Activated B cell treated with CpG ODN at 0.5 μM for 24 hours (primary cell): ENCODE measurements at regions of chr9 and their contacts with region 1.

Region 1: GRCh38 chr9:33167046-33167808 is at the start of gene B4GALT1:
- DNase-seq: peak; percentile 95
- ATAC-seq: peak; percentile 74
- H3K4me3 Mint-ChIP-seq: peak within 1 kb of the TSS; percentile 97
- H3K27ac Mint-ChIP-seq: peak within 1 kb of the TSS; percentile 98
- H3K4me1 Mint-ChIP-seq: peaks cover 63% of the 10 kb centered on the region
- H3K27me3 Mint-ChIP-seq: no peaks in the 10 kb centered on the region
- CTCF ChIP-seq: no peak
- total RNA-seq, gene B4GALT1: 111 and 118 TPM in 2 replicates

Region 2: GRCh38 chr9:32550562-32551433 is 616.4 kb before region 1 on chr9:
- CTCF ChIA-PET with region 1: no interaction called
- POLR2A ChIA-PET with region 1: interaction called, 7 read pairs
- intact Hi-C with region 1: loop called (anchors 10 kb)
- DNase-seq: peak; percentile 91
- ATAC-seq: peak; percentile 80
- H3K4me3 Mint-ChIP-seq: peak overlapping the region; percentile 95
- H3K27ac Mint-ChIP-seq: peak overlapping the region; percentile 98
- H3K4me1 Mint-ChIP-seq: peaks cover 34% of the 10 kb centered on the region
- H3K27me3 Mint-ChIP-seq: no peaks in the 10 kb centered on the region
- CTCF ChIP-seq: no peak

Region 3: GRCh38 chr9:33076358-33077004 is 90.7 kb before region 1 on chr9 and contains the start of gene SMU1:
- CTCF ChIA-PET with region 1: interaction called, 12 read pairs
- POLR2A ChIA-PET with region 1: interaction called, 23 read pairs
- intact Hi-C with region 1: loop called (anchors 1 kb)
- DNase-seq: peak; percentile 86
- ATAC-seq: peak; percentile 98
- H3K4me3 Mint-ChIP-seq: peak within 1 kb of the TSS; percentile 98
- H3K27ac Mint-ChIP-seq: peak within 1 kb of the TSS; percentile 99
- H3K4me1 Mint-ChIP-seq: peaks cover 26% of the 10 kb centered on the region
- H3K27me3 Mint-ChIP-seq: no peaks in the 10 kb centered on the region
- CTCF ChIP-seq: no peak
- total RNA-seq, gene SMU1: 26.8 and 28.1 TPM in 2 replicates

Region 4: DNA sequence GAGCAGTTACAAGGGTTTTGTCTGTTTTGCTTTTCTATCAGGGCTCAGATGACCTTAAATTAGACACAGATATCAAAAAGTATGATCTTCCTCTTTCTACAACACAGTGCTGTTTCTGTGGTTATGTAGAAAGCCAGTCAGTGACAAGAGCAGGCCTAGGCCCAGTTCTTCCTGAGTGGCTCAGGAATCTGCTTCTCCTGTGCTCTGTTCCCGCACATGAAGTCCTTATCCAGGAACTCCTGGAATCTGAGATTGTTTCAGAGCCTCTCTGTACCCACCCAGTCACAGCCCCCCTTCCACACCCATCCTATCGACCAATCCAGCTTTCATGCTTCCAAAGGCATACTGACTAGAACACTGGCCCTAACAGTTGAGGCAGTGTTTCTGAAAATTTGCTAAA is 50.4 kb before region 1 on chr9:
- CTCF ChIA-PET with region 1: interaction called, 5 read pairs
- POLR2A ChIA-PET with region 1: interaction called, 27 read pairs
- intact Hi-C with region 1: no loop called
- DNase-seq: no peak
- ATAC-seq: peak; percentile 86
- H3K4me3 Mint-ChIP-seq: peak overlapping the region; percentile 70
- H3K27ac Mint-ChIP-seq: peak overlapping the region; percentile 92
- H3K4me1 Mint-ChIP-seq: peaks cover 62% of the 10 kb centered on the region
- H3K27me3 Mint-ChIP-seq: no peaks in the 10 kb centered on the region
- CTCF ChIP-seq: no peak

Region 5: GRCh38 chr9:33139421-33140228 is 27.6 kb before region 1 on chr9:
- CTCF ChIA-PET with region 1: interaction called, 9 read pairs
- POLR2A ChIA-PET with region 1: interaction called, 593 read pairs
- intact Hi-C with region 1: loop called (anchors 1 kb)
- DNase-seq: peak; percentile 17
- ATAC-seq: no peak
- H3K4me3 Mint-ChIP-seq: peak overlapping the region; percentile 75
- H3K27ac Mint-ChIP-seq: peak overlapping the region; percentile 97
- H3K4me1 Mint-ChIP-seq: peaks cover 98% of the 10 kb centered on the region
- H3K27me3 Mint-ChIP-seq: no peaks in the 10 kb centered on the region
- CTCF ChIP-seq: no peak

Region 6: DNA sequence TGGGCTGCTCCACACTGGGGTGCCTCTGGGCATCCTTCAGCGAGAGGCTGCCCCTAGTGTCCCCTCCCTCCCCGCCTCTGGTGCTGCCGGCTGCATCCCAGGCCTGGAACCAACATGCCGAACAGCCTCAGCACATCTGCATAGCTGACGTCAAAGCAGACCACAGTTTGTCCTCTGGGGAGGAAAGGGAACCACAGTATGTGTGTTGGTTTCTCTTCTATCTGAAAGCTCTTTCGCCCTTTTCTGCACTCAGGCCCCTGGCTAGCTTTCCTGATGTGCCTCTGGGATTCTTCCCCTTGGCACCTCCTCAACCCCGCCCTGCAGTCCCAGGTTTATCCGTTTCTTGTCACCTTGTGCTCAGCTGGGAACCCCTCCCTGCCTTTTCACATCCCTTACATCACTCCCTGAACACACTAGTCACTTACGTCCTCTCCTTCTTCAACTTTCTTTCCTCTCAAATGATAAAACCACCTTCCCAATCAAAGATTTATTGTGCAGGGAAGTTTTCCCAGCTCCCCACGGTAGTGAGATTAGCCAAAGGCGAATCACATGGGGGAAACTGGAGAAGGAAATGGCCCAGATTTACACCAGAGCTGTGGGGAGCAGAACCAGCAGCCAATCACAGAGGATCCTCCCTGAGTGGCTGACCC is 35.5 kb after region 1 on chr9:
- CTCF ChIA-PET with region 1: interaction called, 9 read pairs
- POLR2A ChIA-PET with region 1: interaction called, 30 read pairs
- intact Hi-C with region 1: loop called (anchors 1 kb)
- DNase-seq: peak; percentile 67
- ATAC-seq: peak; percentile 98
- H3K4me3 Mint-ChIP-seq: peak overlapping the region; percentile 78
- H3K27ac Mint-ChIP-seq: peak overlapping the region; percentile 83
- H3K4me1 Mint-ChIP-seq: peaks cover 24% of the 10 kb centered on the region
- H3K27me3 Mint-ChIP-seq: peaks cover 1% of the 10 kb centered on the region
- CTCF ChIP-seq: no peak

Region 7: DNA sequence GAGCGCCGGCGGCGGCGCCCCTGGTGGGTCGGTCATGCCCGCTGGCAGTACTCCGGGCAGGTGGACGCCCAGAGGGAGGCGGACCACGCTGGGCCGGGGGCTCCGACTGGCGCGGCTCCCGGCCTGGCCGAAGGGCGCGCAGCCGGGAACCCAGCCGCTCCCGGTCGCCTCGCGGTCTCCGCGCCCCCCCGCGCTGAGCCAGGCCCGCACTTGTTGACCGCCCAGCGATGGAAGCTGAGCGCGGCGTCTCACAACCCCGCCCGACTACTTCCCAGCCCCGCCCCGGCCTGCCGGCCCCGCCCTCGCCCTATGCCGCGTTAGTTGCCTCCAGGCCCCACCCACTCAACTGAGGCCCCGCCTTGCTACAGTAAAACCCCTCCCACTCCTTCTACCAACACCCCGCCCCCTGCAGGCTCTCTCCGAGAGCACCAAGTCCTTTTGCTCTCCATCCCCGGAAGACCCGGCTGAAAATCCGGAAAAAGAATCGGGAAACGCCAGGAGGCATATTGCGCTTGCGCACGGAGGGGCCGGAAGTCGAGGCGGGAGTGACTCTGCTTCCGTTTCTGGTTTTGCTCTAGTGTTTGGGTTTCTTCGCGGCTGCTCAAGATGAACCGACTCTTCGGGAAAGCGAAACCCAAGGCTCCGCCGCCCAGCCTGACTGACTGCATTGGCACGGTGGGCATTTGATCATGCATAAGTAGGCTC is 97.4 kb after region 1 on chr9 and contains the starts of genes BAG1 and CHMP5:
- CTCF ChIA-PET with region 1: no interaction called
- POLR2A ChIA-PET with region 1: interaction called, 9 read pairs
- intact Hi-C with region 1: loop called (anchors 1 kb)
- DNase-seq: peak; percentile 99
- ATAC-seq: peak; percentile 98
- H3K4me3 Mint-ChIP-seq: peak within 1 kb of the TSS; percentile 93
- H3K27ac Mint-ChIP-seq: peak within 1 kb of the TSS; percentile 97
- H3K4me1 Mint-ChIP-seq: peaks cover 39% of the 10 kb centered on the region
- H3K27me3 Mint-ChIP-seq: no peaks in the 10 kb centered on the region
- CTCF ChIP-seq: no peak
- total RNA-seq, gene BAG1: 58.3 and 58.9 TPM in 2 replicates
- total RNA-seq, gene CHMP5: 27.4 and 28.1 TPM in 2 replicates

Region 8: DNA sequence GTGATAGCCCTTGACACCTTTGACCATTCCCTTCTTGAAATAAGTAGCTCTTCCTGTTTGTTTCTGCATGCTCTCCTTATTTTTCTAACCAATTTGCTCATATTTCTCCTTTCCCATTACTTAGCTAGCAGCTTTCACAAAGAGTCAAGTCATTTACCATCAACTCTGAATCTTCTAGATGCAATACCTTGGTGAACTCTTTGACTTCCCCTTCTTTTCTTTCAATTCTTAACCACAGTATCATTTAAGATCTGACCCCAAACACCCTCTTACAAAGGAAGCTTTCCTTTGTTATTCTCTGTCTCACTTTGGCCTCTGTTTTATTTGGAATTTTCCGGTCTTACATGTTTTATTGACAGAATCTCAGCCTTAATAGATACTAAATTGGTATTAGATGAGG is 137.1 kb after region 1 on chr9:
- CTCF ChIA-PET with region 1: no interaction called
- POLR2A ChIA-PET with region 1: no interaction called
- intact Hi-C with region 1: no loop called
- DNase-seq: no peak
- ATAC-seq: no peak
- H3K4me3 Mint-ChIP-seq: no peak overlapping the region
- H3K27ac Mint-ChIP-seq: no peak overlapping the region
- H3K4me1 Mint-ChIP-seq: peaks cover 18% of the 10 kb centered on the region
- H3K27me3 Mint-ChIP-seq: no peaks in the 10 kb centered on the region
- CTCF ChIP-seq: no peak

Region 9: DNA sequence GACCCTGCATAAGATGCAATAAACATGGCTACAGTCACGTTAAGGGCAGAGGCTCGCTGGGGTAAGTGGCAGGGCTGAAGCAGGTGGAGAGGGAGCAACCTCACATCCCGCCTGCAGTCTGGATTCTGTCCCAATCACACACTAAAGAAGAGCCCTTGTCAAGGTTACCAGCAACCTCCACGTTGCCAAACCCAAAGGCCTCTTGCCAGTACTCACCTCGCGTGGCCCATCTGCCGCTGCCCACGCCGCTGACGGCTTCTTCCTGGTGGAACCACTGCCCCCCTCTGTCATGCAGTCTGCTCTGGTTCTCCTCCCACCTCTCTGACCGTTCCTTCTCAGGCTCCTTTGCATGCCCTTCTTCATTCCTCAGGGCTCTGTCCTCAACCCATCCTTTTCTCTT is 226.4 kb after region 1 on chr9:
- CTCF ChIA-PET with region 1: no interaction called
- POLR2A ChIA-PET with region 1: no interaction called
- intact Hi-C with region 1: no loop called
- DNase-seq: no peak
- ATAC-seq: no peak
- H3K4me3 Mint-ChIP-seq: no peak overlapping the region
- H3K27ac Mint-ChIP-seq: no peak overlapping the region
- H3K4me1 Mint-ChIP-seq: no peaks in the 10 kb centered on the region
- H3K27me3 Mint-ChIP-seq: peaks cover 5% of the 10 kb centered on the region
- CTCF ChIP-seq: no peak